ENCODE measurements at regions of chr6 and their contacts with region 1.

Region 1: DNA sequence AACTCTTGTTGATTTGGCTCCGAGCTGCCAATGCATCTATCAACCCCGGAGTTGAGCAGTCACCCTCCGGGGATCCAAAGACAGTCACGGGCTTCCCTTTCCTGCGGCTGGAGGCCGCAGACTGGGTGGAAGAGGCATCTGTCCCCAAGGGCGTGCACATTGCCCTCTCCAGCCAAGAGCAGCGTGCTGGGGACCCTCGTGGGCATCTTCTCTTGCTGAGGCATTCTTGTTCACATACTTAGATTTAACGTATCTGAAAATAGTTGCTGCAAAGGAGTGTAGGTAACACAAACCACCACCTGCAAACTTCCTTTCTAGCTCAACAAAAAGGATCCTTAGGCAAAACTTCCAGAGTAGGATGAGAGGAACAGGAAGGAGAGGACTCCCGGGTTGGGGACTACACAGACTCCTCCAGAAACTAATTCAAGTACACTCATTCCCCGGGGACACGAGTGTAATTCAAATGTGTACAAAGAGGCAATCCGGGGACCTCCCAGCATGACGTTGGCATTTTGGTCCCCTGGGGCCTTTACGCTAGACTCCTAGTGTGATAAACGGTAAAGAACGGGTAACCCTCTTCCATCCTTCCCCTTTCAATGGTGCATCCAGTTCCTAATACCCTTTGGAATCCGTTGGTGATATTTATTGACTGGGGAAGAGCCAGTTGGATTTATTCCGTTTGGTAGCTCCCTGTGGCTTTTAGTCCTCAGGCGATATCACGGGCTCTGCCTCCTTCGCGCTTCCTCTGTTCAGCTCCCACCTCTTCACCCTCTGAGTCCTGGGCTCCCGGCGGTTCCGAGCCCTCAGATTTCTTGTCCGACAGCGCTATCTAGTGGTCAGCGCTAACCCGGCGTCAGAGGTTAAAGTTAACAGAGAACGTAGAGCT is 2.7 kb upstream of the COL12A1 start:
- DNase-seq: peak; percentile 92
- ATAC-seq: peak; percentile 74

Region 2: DNA sequence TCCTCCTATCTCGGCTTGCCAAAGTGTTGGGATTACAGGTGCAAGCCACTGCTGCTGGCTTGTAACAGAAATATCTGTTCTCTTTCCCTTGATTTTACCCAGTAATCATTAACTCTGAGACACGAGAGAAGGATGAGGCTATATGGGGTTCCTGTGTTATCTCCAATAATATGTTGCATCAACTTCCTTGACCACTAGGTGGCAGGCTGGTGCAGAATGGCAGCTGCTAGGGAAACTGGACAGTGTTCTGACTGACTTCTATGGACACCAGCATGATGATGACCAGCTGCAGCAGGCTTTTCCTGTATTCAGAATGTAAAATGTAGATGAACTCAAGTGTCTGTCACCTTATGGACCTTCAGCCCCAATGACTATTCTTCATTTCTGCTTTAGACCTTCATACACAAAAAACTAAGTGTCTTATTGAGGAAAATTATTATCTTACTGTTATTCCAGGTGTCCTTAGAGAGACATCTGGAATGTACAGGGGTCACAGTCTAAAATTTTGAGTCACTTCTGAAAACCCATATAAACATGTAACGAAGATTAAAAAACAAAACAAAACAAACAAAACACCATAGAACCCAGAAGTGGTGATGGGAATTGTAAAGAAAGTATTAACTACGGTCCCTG is 1533.0 kb before region 1 on chr6:
- intact Hi-C with region 1: loop called (anchors 10 kb)
- DNase-seq: peak; percentile 74
- ATAC-seq: peak; percentile 88

Region 3: DNA sequence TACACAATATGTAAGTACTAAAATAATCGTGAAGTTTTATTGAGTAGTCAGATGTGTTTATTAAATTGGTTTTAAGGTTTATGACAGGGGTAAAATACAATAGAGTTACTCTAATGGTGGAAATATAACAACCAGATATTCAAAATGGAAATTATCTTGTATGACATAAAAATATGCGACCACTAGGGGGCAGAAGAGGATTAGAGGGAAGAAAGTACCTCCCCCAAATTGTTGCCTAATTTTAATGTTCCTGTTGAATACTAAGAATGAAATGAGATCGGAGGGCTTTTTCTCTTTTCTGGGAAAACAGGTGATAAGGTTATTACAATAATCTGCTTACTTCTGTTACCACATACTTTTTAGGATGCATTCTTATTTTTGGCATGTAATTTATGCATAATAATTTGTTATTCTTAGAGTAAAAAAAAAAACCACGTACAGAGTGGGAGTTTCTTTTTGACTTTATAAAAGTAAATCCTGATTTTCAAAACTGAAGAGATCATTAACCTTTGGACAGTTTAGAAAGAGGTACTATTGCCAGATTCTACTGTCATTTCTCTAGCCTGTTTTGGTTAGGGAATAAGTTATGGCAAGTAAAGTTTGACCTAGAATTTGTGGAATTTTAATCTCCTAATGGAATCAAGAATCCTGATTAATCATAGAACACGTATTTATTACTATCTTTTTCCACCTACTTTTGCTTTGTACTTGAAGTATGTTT is 1353.4 kb before region 1 on chr6:
- intact Hi-C with region 1: loop called (anchors 10 kb)
- DNase-seq: no peak
- ATAC-seq: no peak

Region 4: GRCh38 chr6:74091136-74091793 is 1117.3 kb before region 1 on chr6:
- intact Hi-C with region 1: loop called (anchors 10 kb)
- DNase-seq: no peak
- ATAC-seq: peak; percentile 46

Region 5: DNA sequence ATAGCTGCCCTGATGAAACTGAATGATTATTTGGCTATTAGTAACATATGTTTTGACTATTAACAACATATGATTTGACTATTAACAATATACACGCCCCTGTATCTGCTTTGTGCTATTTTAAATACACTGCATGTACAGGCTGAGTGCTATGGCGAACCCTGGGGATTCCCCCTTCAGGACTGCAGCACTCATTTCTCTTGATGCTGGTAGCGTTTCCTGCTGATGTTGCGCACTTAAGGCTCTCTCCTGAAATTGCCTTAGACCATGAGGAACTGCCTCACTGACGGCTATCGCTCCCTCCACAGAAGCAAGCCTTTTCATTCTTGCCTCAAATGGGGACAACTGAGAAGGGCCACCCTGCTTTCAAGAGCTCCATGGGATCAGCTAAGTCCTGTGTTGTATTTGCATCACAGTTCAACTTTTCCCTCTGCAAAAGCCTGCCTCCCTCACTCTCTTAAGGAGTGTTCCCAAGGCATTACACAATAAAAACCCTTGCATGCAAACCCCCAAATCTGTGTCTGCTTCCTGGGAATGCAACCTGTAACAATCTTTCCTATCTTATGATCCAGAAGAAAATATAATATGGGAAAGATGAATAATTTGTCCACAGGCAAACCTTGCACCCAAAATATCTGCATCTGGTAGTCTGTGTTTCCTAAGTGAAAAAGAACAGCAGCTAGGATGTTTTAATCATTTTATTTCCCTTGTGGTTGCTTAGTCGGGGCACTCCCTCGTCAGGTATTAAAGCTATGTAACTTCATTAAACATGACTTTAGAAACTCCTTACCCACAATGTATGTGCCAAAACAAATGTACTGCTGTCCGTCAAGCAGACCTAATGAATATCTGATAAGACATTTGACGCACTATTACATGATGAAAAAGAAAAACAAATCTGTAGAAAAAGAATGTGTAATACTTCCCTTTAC is 459.1 kb before region 1 on chr6:
- intact Hi-C with region 1: loop called (anchors 10 kb)
- DNase-seq: no peak
- ATAC-seq: no peak

Region 6: GRCh38 chr6:75098709-75099108 is 109.8 kb before region 1 on chr6:
- intact Hi-C with region 1: no loop called
- DNase-seq: no peak
- ATAC-seq: peak; percentile 98

Region 7: DNA sequence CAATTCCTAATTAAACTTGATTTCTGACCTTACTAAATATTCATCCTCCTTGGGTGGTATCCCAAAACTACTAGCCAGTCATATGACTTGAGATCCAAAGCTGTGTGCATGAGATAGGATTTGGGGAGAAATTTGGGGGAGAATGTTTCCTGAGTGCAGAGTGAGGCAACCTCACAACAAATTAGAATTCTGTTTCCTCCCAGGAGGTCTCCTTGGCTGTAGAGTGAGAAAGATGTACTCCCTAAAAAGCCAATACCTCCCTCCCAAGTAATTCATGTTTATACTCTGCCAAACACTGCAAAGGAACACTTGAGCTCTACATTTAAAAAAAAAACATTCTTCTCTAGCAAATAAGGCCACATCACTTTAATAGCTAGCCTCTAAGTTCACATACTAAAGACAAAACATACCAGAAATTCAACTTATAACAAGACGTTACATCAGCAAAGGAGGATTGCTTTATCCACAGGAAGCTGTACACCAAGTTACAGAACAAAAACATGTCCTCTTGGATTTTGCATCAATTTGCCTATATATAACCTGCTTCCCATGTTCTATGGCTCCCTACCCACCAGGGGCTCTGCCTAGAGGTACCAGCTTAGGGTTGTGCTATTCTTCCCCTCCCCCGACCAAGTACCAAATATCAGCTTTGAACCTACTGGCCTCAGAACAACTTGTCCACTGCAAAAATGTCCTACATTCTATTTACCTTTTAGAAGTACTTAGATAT is 91.4 kb after region 1 on chr6:
- intact Hi-C with region 1: no loop called
- DNase-seq: no peak
- ATAC-seq: peak; percentile 45

Region 8: DNA sequence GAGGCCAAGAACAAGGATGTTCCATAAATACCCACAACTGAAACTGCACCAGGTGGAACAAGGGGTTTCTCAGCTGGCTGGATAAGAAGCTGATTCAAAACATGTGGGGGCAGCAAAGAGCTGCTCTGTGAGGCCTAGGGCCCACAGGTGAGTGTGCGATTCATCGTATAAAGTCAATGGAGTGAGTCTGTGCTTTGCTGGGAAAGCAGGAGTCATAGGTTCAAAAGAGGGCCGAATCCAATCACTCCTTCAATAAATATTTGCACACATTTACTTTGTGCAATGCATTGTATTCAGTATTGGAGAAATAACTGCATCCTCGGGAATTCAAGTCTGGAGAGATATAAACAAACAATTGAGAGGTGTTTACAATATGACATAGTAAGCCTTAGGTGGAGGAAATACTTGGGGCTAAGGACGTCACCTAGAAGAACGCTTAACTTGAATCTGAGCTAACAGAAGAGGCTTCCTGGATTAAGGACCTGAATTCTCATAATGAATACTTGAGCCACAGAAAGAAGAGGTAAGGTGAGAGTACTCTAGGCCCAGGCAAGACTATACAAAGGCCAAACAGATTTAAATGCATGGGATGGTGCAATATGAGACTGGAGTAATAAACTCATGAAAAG is 159.7 kb after region 1 on chr6:
- intact Hi-C with region 1: no loop called
- DNase-seq: no peak
- ATAC-seq: peak; percentile 66